Ascending aorta (tissue), 2 donors: ENCODE measurements at regions of chr14 and their contacts with region 1.

Region 1: DNA sequence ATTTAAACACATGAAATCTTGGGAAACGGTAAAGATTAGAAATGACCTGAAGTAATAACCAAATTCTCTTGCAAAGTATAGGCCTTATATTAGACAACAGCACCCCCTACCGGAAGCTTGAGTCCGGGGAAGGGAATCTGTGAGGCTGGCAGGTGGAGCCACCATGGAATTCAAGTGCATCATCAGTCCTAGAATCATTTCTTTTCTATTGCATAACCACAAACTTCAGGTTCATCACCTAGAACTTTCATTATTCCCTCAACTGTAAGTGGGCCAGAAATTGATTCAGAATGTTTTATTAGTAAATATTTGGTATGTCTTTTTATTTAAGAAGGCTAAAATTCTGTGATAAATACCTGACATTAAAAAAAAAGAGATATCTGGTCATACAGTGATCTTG is 48.5 kb downstream of the AP5M1 start:
- DNase-seq: peak in 1 of 2 donors; percentile 69
- H3K4me3 ChIP-seq: no peak overlapping the region
- H3K27ac ChIP-seq: no peak overlapping the region
- H3K4me1 ChIP-seq: no peaks in the 10 kb centered on the region
- H3K27me3 ChIP-seq: no peaks in the 10 kb centered on the region
- CTCF ChIP-seq: peak; percentile 29 to 72 (median 70)

Region 2: GRCh38 chr14:56247468-56248200 is 1069.7 kb before region 1 on chr14:
- intact Hi-C with region 1: no loop called
- DNase-seq: no peak
- H3K4me3 ChIP-seq: no peak overlapping the region
- H3K27ac ChIP-seq: no peak overlapping the region
- H3K4me1 ChIP-seq: no peaks in the 10 kb centered on the region
- H3K27me3 ChIP-seq: no peaks in the 10 kb centered on the region
- CTCF ChIP-seq: no peak

Region 3: GRCh38 chr14:56491299-56492285 is 825.7 kb before region 1 on chr14:
- intact Hi-C with region 1: loop called (anchors 2 kb)
- DNase-seq: no peak
- H3K4me3 ChIP-seq: no peak overlapping the region
- H3K27ac ChIP-seq: no peak overlapping the region
- H3K4me1 ChIP-seq: no peaks in the 10 kb centered on the region
- H3K27me3 ChIP-seq: no peaks in the 10 kb centered on the region
- CTCF ChIP-seq: peak; percentile 26 to 66 (median 57)

Region 4: DNA sequence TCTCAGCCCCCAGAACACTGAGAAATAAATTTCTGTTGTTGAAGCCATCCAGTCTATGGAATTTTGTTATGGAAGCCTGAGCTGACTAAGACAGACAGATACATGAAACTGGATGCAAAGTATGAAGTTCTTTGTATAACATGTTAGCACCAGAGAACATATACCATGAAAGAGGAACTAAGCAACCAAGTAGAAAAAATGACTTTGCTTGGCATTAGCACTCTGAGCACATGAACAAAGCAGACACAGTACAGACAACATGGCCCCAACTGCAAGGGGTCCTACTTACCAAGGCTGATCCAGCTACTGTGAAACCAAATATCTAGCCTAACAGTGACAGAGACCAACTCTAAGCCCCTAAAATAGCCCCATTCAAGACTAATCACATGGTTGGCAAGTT is 62.4 kb before region 1 on chr14:
- intact Hi-C with region 1: no loop called
- DNase-seq: no peak
- H3K4me3 ChIP-seq: no peak overlapping the region
- H3K27ac ChIP-seq: no peak overlapping the region
- H3K4me1 ChIP-seq: no peaks in the 10 kb centered on the region
- H3K27me3 ChIP-seq: no peaks in the 10 kb centered on the region
- CTCF ChIP-seq: no peak

Region 5: DNA sequence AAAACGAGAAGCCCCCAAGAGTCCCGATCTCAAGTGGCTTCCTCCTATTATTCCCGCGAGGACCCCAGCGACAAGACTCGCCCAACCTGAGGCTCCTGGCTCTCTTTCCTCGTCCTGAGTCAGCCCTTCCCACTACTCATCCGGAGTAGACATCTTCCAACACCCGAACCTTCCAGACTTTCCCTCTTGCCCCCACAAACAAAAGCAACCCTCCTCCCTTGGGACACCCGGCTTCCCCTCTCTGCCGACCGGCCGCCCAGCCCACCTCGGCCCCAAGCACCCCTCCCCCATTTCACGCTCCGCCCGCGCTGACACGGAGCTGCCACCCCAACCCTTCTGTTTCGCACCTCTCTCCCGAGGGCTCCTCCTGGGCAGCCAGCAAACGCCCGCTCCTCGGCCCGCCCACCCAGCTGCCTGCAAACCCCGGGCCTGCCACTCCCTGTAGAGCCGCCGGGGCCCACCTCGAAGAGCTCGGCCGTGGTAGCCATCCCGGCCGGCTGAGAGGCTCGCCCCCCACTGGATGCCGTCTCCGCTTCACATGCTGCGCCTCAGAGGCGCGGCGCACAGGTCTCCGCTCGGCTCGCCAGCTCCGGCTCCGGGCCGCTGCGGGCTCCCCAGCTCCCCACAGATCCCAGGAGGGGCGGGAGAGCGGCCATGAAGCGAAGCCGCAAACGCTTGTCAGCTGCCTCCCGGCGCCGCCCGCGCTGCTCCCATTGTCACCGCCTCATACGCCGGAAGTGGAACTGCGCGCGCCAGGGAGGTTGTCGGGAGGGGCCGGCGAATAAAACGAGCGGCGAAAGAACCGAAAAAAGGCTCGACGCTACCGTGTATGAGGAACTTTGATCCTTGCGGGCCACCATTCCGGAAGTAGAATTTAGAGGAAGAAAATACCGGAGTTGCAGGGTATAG is 48.9 kb before region 1 on chr14 and contains the starts of genes AP5M1 and EXOC5:
- intact Hi-C with region 1: no loop called
- DNase-seq: peak; percentile 58 to 94
- H3K4me3 ChIP-seq: peak within 1 kb of the TSS; percentile 78 to 87
- H3K27ac ChIP-seq: peak within 1 kb of the TSS; percentile 92 to 95
- H3K4me1 ChIP-seq: peaks cover 6 to 34% of the 10 kb centered on the region in 2 donors
- H3K27me3 ChIP-seq: no peaks in the 10 kb centered on the region
- CTCF ChIP-seq: peak in 2 of 3 experiments; percentile 16
- total RNA-seq, gene AP5M1: 6.2 TPM
- total RNA-seq, gene EXOC5: 19.2 TPM